Right cardiac atrium (tissue), 5 donors: ENCODE measurements at regions of chr6 and their contacts with region 1.

Region 1: GRCh38 chr6:105409734-105410133 is 6.9 kb upstream of the PREP start:
- DNase-seq: no peak
- ATAC-seq: no peak
- H3K4me3 ChIP-seq: no peak overlapping the region
- H3K27ac ChIP-seq: no peak overlapping the region
- H3K4me1 ChIP-seq: no peaks in the 10 kb centered on the region
- H3K27me3 ChIP-seq: no peaks in the 10 kb centered on the region

Region 2: GRCh38 chr6:105094133-105094640 is 315.5 kb before region 1 on chr6:
- intact Hi-C with region 1: loop called in 2 of 4 experiments (anchors 5 kb)
- DNase-seq: no peak
- ATAC-seq: no peak
- H3K4me3 ChIP-seq: no peak overlapping the region
- H3K27ac ChIP-seq: no peak overlapping the region
- H3K4me1 ChIP-seq: no peaks in the 10 kb centered on the region
- H3K27me3 ChIP-seq: no peaks in the 10 kb centered on the region